CD4-positive, alpha-beta memory T cell (primary cell): ENCODE measurements at regions of chr7 and their contacts with region 1.

Region 1: DNA sequence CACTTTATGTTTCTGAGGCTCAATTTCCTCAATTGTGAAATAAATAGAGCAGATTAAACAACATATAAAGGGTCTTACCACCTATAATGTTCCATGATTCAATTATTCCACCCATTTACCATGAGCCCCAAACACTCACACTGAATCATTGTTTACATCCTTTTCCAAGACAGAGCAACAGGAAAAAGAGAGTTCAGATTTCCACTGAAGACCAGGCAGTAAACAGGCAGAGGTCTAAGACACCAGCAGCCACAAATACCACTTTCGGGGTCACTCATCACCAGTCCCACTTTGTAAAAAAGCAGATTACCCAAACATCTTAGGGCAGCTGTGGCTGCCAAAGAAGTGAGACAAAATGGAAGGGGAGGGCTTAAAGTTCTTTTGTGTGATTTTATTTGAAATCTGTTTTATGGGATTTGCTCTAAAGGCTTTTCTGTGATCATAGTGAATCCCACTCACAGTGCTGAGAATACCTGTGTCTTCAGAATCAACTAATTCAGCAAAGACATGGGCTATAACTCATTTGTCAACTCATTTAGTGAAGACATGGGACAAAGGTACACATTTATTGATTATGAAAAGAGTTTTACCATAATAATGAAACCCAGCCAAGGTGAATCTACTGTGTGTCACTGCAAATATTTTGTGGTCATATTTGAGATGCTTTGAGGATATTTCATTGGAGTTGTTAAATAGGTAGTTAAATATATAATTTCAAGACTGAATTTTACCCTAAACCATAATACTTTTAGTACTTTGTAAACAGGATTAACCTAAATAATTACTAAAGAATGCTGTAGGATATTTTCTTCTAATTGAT is 24.8 kb upstream of the DLD start:
- DNase-seq: no peak
- H3K4me3 ChIP-seq: no peak overlapping the region
- H3K4me3 Mint-ChIP-seq: peak overlapping the region in 6 of 8 donors; percentile 22 to 71 (median 64)
- H3K27ac ChIP-seq: no peak overlapping the region
- H3K27ac Mint-ChIP-seq: peak overlapping the region; percentile 22 to 91 (median 87)
- H3K4me1 ChIP-seq: peaks cover 35% of the 10 kb centered on the region
- H3K4me1 Mint-ChIP-seq: peaks cover 23 to 45% (median 36%) of the 10 kb centered on the region in 4 donors
- H3K27me3 ChIP-seq: no peaks in the 10 kb centered on the region
- H3K27me3 Mint-ChIP-seq: no peaks in the 10 kb centered on the region

Region 2: DNA sequence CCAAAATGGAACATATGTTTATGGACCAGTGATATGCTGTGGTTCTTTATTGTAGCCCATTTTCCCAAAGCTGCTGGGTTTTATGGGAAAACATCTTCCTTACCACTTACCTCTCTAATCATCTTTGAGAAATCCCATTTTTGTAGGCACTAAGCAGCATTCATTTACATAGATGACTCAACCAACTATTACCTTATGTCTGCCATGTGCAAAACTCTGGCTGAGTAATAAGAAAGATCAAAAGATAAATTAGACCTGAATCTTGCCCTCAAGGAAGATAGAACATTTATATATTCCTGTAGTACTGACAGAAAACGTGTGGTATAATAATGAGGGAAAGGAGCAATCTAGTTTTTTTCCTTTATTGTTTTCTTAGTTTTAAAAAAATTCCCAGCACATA is 97.9 kb before region 1 on chr7:
- CTCF ChIA-PET with region 1: interaction called, 3 read pairs
- POLR2A ChIA-PET with region 1: interaction called, 11 read pairs
- intact Hi-C with region 1: no loop called
- DNase-seq: no peak
- H3K4me3 ChIP-seq: no peak overlapping the region
- H3K4me3 Mint-ChIP-seq: no peak overlapping the region
- H3K27ac ChIP-seq: no peak overlapping the region
- H3K27ac Mint-ChIP-seq: no peak overlapping the region
- H3K4me1 ChIP-seq: no peaks in the 10 kb centered on the region
- H3K4me1 Mint-ChIP-seq: peaks cover 10 to 28% (median 23%) of the 10 kb centered on the region in 4 donors
- H3K27me3 ChIP-seq: no peaks in the 10 kb centered on the region
- H3K27me3 Mint-ChIP-seq: no peaks in the 10 kb centered on the region

Region 3: DNA sequence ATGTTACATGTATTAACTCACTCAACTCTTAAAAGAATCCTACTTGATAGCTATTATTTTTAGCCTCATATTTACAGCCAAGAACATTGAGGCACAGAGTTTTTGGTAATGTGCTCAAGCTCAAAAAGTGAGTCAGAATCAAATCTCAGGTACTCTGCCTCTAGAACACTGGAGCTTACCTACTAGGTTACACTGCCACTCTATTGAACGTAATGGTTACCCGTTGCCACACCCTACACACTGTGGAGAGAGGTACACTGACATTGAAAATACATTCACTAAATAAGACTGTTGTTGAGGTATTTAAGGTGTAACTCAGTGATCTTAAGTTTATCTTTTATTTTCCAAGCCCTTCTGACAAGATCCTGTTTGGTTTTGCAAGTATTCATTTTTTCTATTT is 81.0 kb before region 1 on chr7:
- CTCF ChIA-PET with region 1: no interaction called
- POLR2A ChIA-PET with region 1: interaction called, 10 read pairs
- intact Hi-C with region 1: no loop called
- DNase-seq: peak in 1 of 5 donors; percentile 9
- H3K4me3 ChIP-seq: no peak overlapping the region
- H3K4me3 Mint-ChIP-seq: peak overlapping the region in 6 of 8 donors; percentile 6 to 78 (median 68)
- H3K27ac ChIP-seq: no peak overlapping the region
- H3K27ac Mint-ChIP-seq: peak overlapping the region in 4 of 7 donors; percentile 4 to 76 (median 54)
- H3K4me1 ChIP-seq: peaks cover 24% of the 10 kb centered on the region
- H3K4me1 Mint-ChIP-seq: peaks cover 21 to 44% (median 33%) of the 10 kb centered on the region in 4 donors
- H3K27me3 ChIP-seq: no peaks in the 10 kb centered on the region
- H3K27me3 Mint-ChIP-seq: no peaks in the 10 kb centered on the region

Region 4: GRCh38 chr7:107958764-107959526 is 92.8 kb after region 1 on chr7:
- CTCF ChIA-PET with region 1: no interaction called
- POLR2A ChIA-PET with region 1: no interaction called
- intact Hi-C with region 1: no loop called
- DNase-seq: no peak
- H3K4me3 ChIP-seq: no peak overlapping the region
- H3K4me3 Mint-ChIP-seq: no peak overlapping the region
- H3K27ac ChIP-seq: no peak overlapping the region
- H3K27ac Mint-ChIP-seq: no peak overlapping the region
- H3K4me1 ChIP-seq: no peaks in the 10 kb centered on the region
- H3K4me1 Mint-ChIP-seq: no peaks in the 10 kb centered on the region
- H3K27me3 ChIP-seq: no peaks in the 10 kb centered on the region
- H3K27me3 Mint-ChIP-seq: peaks cover 11 to 22% of the 10 kb centered on the region in 2 donors

Region 5: GRCh38 chr7:108083980-108084379 is 217.8 kb after region 1 on chr7:
- CTCF ChIA-PET with region 1: no interaction called
- POLR2A ChIA-PET with region 1: no interaction called
- intact Hi-C with region 1: no loop called
- DNase-seq: no peak
- H3K4me3 ChIP-seq: no peak overlapping the region
- H3K4me3 Mint-ChIP-seq: no peak overlapping the region
- H3K27ac ChIP-seq: no peak overlapping the region
- H3K27ac Mint-ChIP-seq: no peak overlapping the region
- H3K4me1 ChIP-seq: no peaks in the 10 kb centered on the region
- H3K4me1 Mint-ChIP-seq: no peaks in the 10 kb centered on the region
- H3K27me3 ChIP-seq: no peaks in the 10 kb centered on the region
- H3K27me3 Mint-ChIP-seq: peaks cover 0 to 1% of the 10 kb centered on the region in 2 donors